Activated CD4-positive, alpha-beta memory T cell treated with anti-CD3 and anti-CD28 coated beads for 36 hours (primary cell): ENCODE measurements at regions of chr6 and their contacts with region 1.

Region 1: GRCh38 chr6:138773177-138774091 is at the start of gene CCDC28A:
- DNase-seq: peak; percentile 94
- H3K4me3 Mint-ChIP-seq: peak within 1 kb of the TSS; percentile 97
- H3K27ac Mint-ChIP-seq: peak within 1 kb of the TSS; percentile 99
- H3K4me1 Mint-ChIP-seq: peaks cover 22% of the 10 kb centered on the region
- H3K27me3 Mint-ChIP-seq: no peaks in the 10 kb centered on the region
- total RNA-seq, gene CCDC28A: 17.9 to 18.8 TPM

Region 2: GRCh38 chr6:138403801-138404661 is 369.4 kb before region 1 on chr6 and contains the start of gene HEBP2:
- CTCF ChIA-PET with region 1: no interaction called
- POLR2A ChIA-PET with region 1: no interaction called
- intact Hi-C with region 1: loop called (anchors 1 kb)
- DNase-seq: peak; percentile 97
- H3K4me3 Mint-ChIP-seq: peak within 1 kb of the TSS; percentile 79
- H3K27ac Mint-ChIP-seq: peak within 1 kb of the TSS; percentile 58
- H3K4me1 Mint-ChIP-seq: peaks cover 23% of the 10 kb centered on the region
- H3K27me3 Mint-ChIP-seq: no peaks in the 10 kb centered on the region
- total RNA-seq, gene HEBP2: 49.5 to 49.6 TPM

Region 3: DNA sequence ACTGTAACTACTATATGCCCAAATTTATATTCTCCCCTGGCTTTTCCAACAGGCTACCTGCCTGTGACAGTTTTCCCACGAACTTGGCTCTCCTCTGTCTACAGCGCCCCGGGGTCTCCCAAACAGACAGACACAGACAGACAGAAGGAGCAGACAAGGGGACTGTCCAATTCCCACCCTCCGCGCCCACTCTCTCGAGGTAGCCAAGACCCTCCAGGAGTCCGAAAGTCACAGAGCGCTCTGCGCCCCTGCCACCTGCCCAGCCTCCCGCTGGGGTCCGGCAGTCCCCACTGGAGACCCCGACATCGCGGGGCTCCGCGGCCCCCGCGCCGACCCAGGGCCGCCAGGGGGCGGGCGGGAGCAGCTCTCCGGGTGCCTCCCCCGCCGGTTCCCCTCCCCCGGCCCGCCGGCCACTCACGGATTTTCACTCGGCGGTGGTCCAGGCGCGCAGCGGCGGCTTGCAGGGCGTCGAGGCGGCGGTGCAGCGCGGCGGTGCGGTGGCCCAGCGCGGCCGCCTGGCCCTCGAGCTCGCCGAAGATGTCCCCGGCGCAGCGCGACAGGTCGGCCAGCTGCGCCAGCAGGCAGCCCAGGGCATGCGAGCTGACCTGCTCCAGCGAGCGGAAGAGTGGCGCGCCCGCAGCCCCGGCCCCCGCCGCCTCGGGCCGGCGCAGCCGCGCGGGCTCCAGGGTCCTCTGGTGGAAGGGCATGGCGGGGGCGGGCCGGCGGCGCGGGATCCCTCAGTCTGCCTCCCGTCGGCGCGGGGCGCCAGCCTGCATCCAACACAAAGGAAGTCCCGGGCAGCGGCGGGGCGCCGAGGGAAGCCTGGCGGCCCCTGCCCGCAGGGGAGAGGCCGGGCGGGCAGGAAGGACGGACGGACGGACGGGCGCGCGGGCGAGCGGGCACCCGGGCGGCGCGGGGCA is 81.1 kb before region 1 on chr6:
- CTCF ChIA-PET with region 1: interaction called, 5 read pairs
- POLR2A ChIA-PET with region 1: no interaction called
- intact Hi-C with region 1: loop called (anchors 2 kb)
- DNase-seq: peak; percentile 64
- H3K4me3 Mint-ChIP-seq: peak overlapping the region; percentile 73
- H3K27ac Mint-ChIP-seq: no peak overlapping the region
- H3K4me1 Mint-ChIP-seq: peaks cover 9% of the 10 kb centered on the region
- H3K27me3 Mint-ChIP-seq: peaks cover 27% of the 10 kb centered on the region

Region 4: DNA sequence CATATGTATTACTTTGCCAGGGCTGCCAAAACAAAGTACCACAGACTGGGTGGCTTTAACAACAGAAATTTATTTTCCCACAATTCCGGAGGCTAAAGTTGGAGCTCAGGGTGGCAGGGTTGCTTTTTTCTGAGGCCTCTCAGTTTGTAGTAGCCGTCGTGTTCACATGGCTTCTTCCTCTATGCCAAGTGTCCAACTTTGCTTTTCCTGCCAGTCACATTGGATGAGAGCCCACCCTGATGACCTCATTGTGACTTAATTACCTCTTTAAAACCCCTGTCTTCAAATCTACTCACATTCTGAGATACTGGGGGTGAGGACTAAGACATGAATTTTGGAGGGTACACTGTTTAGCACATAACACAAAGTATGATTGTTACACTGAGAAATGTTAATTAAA is 12.5 kb after region 1 on chr6:
- CTCF ChIA-PET with region 1: no interaction called
- POLR2A ChIA-PET with region 1: no interaction called
- intact Hi-C with region 1: loop called (anchors 1 kb)
- DNase-seq: no peak
- H3K4me3 Mint-ChIP-seq: no peak overlapping the region
- H3K27ac Mint-ChIP-seq: no peak overlapping the region
- H3K4me1 Mint-ChIP-seq: peaks cover 6% of the 10 kb centered on the region
- H3K27me3 Mint-ChIP-seq: no peaks in the 10 kb centered on the region

Region 5: DNA sequence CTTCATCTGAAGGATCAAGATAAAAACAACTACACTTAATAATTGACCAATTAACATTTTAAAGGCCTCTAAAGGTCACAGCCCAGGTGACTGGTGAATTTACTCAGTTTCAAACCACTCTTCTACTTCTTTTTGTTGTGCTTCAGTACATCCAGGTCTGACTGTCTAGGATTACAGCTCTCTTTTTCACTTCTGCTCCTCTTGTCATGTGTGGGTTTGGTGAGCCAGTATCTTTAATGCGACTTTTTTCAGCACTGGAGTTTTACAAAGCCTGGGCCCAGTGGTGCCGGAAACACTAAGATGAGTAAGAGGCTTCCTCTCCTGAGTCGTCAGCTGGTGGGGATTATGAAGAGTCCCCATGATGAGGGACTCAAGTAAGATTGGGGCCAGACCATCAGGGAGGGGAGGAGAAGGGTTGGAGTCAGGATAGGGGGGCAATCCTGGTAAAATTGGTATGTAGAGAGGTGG is 388.4 kb after region 1 on chr6:
- CTCF ChIA-PET with region 1: no interaction called
- POLR2A ChIA-PET with region 1: no interaction called
- intact Hi-C with region 1: loop called (anchors 2 kb)
- DNase-seq: peak; percentile 88
- H3K4me3 Mint-ChIP-seq: peak overlapping the region; percentile 61
- H3K27ac Mint-ChIP-seq: peak overlapping the region; percentile 96
- H3K4me1 Mint-ChIP-seq: peaks cover 92% of the 10 kb centered on the region
- H3K27me3 Mint-ChIP-seq: no peaks in the 10 kb centered on the region